ENCODE measurements at regions of chr2 and their contacts with region 1.

Region 1: GRCh38 chr2:111120253-111121027 is at the start of gene BCL2L11:
- DNase-seq: peak; percentile 78 to 98 (median 85)
- ATAC-seq: peak; percentile 85
- H3K4me3 ChIP-seq: peak within 1 kb of the TSS; percentile 87
- H3K4me3 Mint-ChIP-seq: peak within 1 kb of the TSS; percentile 92 to 96 (median 95)
- H3K27ac ChIP-seq: peak within 1 kb of the TSS; percentile 66
- H3K27ac Mint-ChIP-seq: peak within 1 kb of the TSS; percentile 70 to 89 (median 80)
- H3K4me1 ChIP-seq: peaks cover 19 to 35% of the 10 kb centered on the region in 2 donors
- H3K4me1 Mint-ChIP-seq: peaks cover 27 to 53% (median 37%) of the 10 kb centered on the region in 7 donors
- H3K27me3 ChIP-seq: peaks cover 0 to 16% of the 10 kb centered on the region in 2 donors
- H3K27me3 Mint-ChIP-seq: peaks cover 26 to 52% (median 36%) of the 10 kb centered on the region in 5 donors
- total RNA-seq, gene BCL2L11: 33.1 to 67.6 (median 39.0) TPM

Region 2: GRCh38 chr2:110677530-110678456 is 442.6 kb before region 1 on chr2 and contains the start of gene BUB1:
- CTCF ChIA-PET with region 1: no interaction called
- POLR2A ChIA-PET with region 1: interaction called, 3 read pairs
- intact Hi-C with region 1: loop called (anchors 1 to 2 kb)
- DNase-seq: peak; percentile 88 to 96 (median 94)
- ATAC-seq: peak; percentile 97
- H3K4me3 ChIP-seq: peak within 1 kb of the TSS; percentile 87
- H3K4me3 Mint-ChIP-seq: peak within 1 kb of the TSS; percentile 91 to 100 (median 99)
- H3K27ac ChIP-seq: peak within 1 kb of the TSS; percentile 73
- H3K27ac Mint-ChIP-seq: peak within 1 kb of the TSS; percentile 92 to 100 (median 98)
- H3K4me1 ChIP-seq: peaks cover 0 to 17% of the 10 kb centered on the region in 2 donors
- H3K4me1 Mint-ChIP-seq: peaks cover 5 to 45% (median 20%) of the 10 kb centered on the region in 7 donors
- H3K27me3 ChIP-seq: no peaks in the 10 kb centered on the region
- H3K27me3 Mint-ChIP-seq: peaks cover 0 to 16% (median 0%) of the 10 kb centered on the region in 5 donors
- total RNA-seq, gene BUB1: 2.3 to 73.7 (median 2.6) TPM

Region 3: GRCh38 chr2:111135910-111136297 is 15.5 kb after region 1 on chr2:
- CTCF ChIA-PET with region 1: no interaction called
- POLR2A ChIA-PET with region 1: interaction called, 7 read pairs
- intact Hi-C with region 1: loop called in 1 of 2 experiments (anchors 2 kb)
- DNase-seq: no peak
- ATAC-seq: peak; percentile 52
- H3K4me3 ChIP-seq: no peak overlapping the region
- H3K4me3 Mint-ChIP-seq: no peak overlapping the region
- H3K27ac ChIP-seq: no peak overlapping the region
- H3K27ac Mint-ChIP-seq: peak overlapping the region in 1 of 9 donors; percentile 35
- H3K4me1 ChIP-seq: no peaks in the 10 kb centered on the region
- H3K4me1 Mint-ChIP-seq: peaks cover 17 to 43% (median 29%) of the 10 kb centered on the region in 7 donors
- H3K27me3 ChIP-seq: no peaks in the 10 kb centered on the region
- H3K27me3 Mint-ChIP-seq: no peaks in the 10 kb centered on the region

Region 4: GRCh38 chr2:111705711-111706336 is 585.4 kb after region 1 on chr2:
- CTCF ChIA-PET with region 1: no interaction called
- POLR2A ChIA-PET with region 1: no interaction called
- intact Hi-C with region 1: loop called (anchors 1 to 2 kb)
- DNase-seq: peak in 1 of 9 donors; percentile 59
- ATAC-seq: peak; percentile 49
- H3K4me3 ChIP-seq: no peak overlapping the region
- H3K4me3 Mint-ChIP-seq: peak overlapping the region in 1 of 10 donors; percentile 33
- H3K27ac ChIP-seq: no peak overlapping the region
- H3K27ac Mint-ChIP-seq: peak overlapping the region in 2 of 9 donors; percentile 46 to 85
- H3K4me1 ChIP-seq: peaks cover 0 to 7% of the 10 kb centered on the region in 2 donors
- H3K4me1 Mint-ChIP-seq: peaks cover 0 to 74% (median 3%) of the 10 kb centered on the region in 7 donors
- H3K27me3 ChIP-seq: no peaks in the 10 kb centered on the region
- H3K27me3 Mint-ChIP-seq: peaks cover 0 to 15% (median 0%) of the 10 kb centered on the region in 5 donors

Region 5: GRCh38 chr2:112187805-112188596 is 1067.6 kb after region 1 on chr2:
- CTCF ChIA-PET with region 1: no interaction called
- POLR2A ChIA-PET with region 1: no interaction called
- intact Hi-C with region 1: loop called in 1 of 2 experiments (anchors 5 kb)
- DNase-seq: peak in 8 of 9 donors; percentile 69 to 95 (median 88)
- ATAC-seq: peak; percentile 90
- H3K4me3 ChIP-seq: peak overlapping the region; percentile 31
- H3K4me3 Mint-ChIP-seq: peak overlapping the region; percentile 58 to 88 (median 74)
- H3K27ac ChIP-seq: peak overlapping the region; percentile 85
- H3K27ac Mint-ChIP-seq: peak overlapping the region; percentile 92 to 100 (median 99)
- H3K4me1 ChIP-seq: peaks cover 21 to 80% of the 10 kb centered on the region in 2 donors
- H3K4me1 Mint-ChIP-seq: peaks cover 59 to 96% (median 94%) of the 10 kb centered on the region in 7 donors
- H3K27me3 ChIP-seq: no peaks in the 10 kb centered on the region
- H3K27me3 Mint-ChIP-seq: no peaks in the 10 kb centered on the region

Region 6: GRCh38 chr2:112764071-112765044 is 1643.9 kb after region 1 on chr2 and contains the start of gene CKAP2L:
- CTCF ChIA-PET with region 1: no interaction called
- POLR2A ChIA-PET with region 1: no interaction called
- intact Hi-C with region 1: loop called in 1 of 2 experiments (anchors 5 kb)
- DNase-seq: peak; percentile 85 to 97 (median 94)
- ATAC-seq: peak; percentile 99
- H3K4me3 ChIP-seq: peak within 1 kb of the TSS; percentile 82
- H3K4me3 Mint-ChIP-seq: peak within 1 kb of the TSS; percentile 90 to 97 (median 92)
- H3K27ac ChIP-seq: peak within 1 kb of the TSS; percentile 65
- H3K27ac Mint-ChIP-seq: peak within 1 kb of the TSS; percentile 29 to 95 (median 71)
- H3K4me1 ChIP-seq: peaks cover 12 to 16% of the 10 kb centered on the region in 2 donors
- H3K4me1 Mint-ChIP-seq: peaks cover 15 to 61% (median 30%) of the 10 kb centered on the region in 7 donors
- H3K27me3 ChIP-seq: no peaks in the 10 kb centered on the region
- H3K27me3 Mint-ChIP-seq: no peaks in the 10 kb centered on the region
- total RNA-seq, gene CKAP2L: 0.69 to 36.2 (median 2.4) TPM in 3 of 5 experiments, not detected in the others